CD8-positive, alpha-beta T cell (primary cell): ENCODE measurements at regions of chr13 and their contacts with region 1.

Region 1: GRCh38 chr13:81017513-81018152 is 676.7 kb upstream of the SPRY2 start:
- DNase-seq: peak in 2 of 9 experiments; percentile 13 to 38
- ATAC-seq: no peak
- H3K4me3 ChIP-seq: no peak overlapping the region
- H3K4me3 Mint-ChIP-seq: no peak overlapping the region
- H3K27ac ChIP-seq: no peak overlapping the region
- H3K27ac Mint-ChIP-seq: no peak overlapping the region
- H3K4me1 ChIP-seq: no peaks in the 10 kb centered on the region
- H3K4me1 Mint-ChIP-seq: no peaks in the 10 kb centered on the region
- H3K27me3 ChIP-seq: no peaks in the 10 kb centered on the region
- H3K27me3 Mint-ChIP-seq: no peaks in the 10 kb centered on the region
- CTCF ChIP-seq: no peak

Region 2: GRCh38 chr13:79679334-79679733 is 1338.3 kb before region 1 on chr13:
- CTCF ChIA-PET with region 1: interaction called, 3 read pairs
- POLR2A ChIA-PET with region 1: no interaction called
- intact Hi-C with region 1: loop called (anchors 2 to 5 kb)
- DNase-seq: peak in 7 of 9 experiments; percentile 3 to 46 (median 20)
- ATAC-seq: no peak
- H3K4me3 ChIP-seq: no peak overlapping the region
- H3K4me3 Mint-ChIP-seq: no peak overlapping the region
- H3K27ac ChIP-seq: no peak overlapping the region
- H3K27ac Mint-ChIP-seq: no peak overlapping the region
- H3K4me1 ChIP-seq: no peaks in the 10 kb centered on the region
- H3K4me1 Mint-ChIP-seq: no peaks in the 10 kb centered on the region
- H3K27me3 ChIP-seq: no peaks in the 10 kb centered on the region
- H3K27me3 Mint-ChIP-seq: peaks cover 6% of the 10 kb centered on the region
- CTCF ChIP-seq: peak; percentile 43

Region 3: DNA sequence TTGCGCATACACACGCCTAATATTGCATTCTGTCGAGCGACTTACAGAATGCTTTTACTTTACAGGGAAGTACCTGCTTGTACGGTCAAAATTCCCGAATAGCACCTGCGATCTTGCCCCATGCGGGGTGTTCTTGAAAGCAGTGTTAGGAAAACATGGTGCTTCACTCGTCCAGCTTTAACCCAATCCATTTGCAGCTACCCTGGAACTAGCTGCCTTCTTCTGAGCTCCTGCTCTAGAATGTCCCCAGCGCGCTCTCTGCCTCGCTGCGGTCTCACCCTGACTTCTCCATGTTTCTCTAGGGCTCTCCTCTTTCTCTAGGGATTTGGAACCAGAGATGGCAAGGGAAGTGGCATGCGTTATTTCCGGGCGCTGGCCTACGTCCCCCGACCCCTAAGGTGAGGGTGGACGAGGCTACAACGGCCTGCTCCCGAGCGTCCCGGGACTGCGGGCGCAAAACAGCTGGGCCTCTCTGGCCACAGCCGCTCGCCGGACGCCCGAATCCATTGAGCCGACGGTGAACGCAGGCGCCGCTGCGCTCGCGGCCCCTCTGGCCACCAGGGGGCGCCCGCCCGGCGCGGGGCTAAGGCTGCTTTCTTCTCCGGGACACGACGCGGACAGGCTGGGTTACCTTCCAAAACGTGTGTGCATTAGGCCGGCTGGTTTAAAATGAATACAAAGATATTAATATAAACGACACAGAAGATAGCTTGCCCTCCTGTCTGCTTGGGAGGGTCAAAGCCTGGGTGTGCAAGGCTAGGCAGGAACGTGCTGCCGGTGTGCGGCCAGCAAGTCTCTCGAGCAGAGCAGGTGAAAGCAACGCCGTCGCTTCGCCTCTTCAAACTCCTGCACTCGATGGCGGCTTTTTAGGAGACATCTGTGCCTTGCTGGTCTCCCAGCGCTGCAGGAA is 674.9 kb before region 1 on chr13:
- CTCF ChIA-PET with region 1: no interaction called
- POLR2A ChIA-PET with region 1: no interaction called
- intact Hi-C with region 1: loop called in 1 of 2 experiments (anchors 5 kb)
- DNase-seq: peak; percentile 33 to 81 (median 64)
- ATAC-seq: peak; percentile 50
- H3K4me3 ChIP-seq: peak overlapping the region; percentile 14 to 59
- H3K4me3 Mint-ChIP-seq: peak overlapping the region; percentile 83
- H3K27ac ChIP-seq: no peak overlapping the region
- H3K27ac Mint-ChIP-seq: no peak overlapping the region
- H3K4me1 ChIP-seq: peaks cover 24% of the 10 kb centered on the region
- H3K4me1 Mint-ChIP-seq: peaks cover 27% of the 10 kb centered on the region
- H3K27me3 ChIP-seq: peaks cover 10 to 22% of the 10 kb centered on the region in 2 experiments
- H3K27me3 Mint-ChIP-seq: peaks cover 36% of the 10 kb centered on the region
- CTCF ChIP-seq: peak; percentile 94